ENCODE measurements at regions of chr3 and their contacts with region 1.

Region 1: DNA sequence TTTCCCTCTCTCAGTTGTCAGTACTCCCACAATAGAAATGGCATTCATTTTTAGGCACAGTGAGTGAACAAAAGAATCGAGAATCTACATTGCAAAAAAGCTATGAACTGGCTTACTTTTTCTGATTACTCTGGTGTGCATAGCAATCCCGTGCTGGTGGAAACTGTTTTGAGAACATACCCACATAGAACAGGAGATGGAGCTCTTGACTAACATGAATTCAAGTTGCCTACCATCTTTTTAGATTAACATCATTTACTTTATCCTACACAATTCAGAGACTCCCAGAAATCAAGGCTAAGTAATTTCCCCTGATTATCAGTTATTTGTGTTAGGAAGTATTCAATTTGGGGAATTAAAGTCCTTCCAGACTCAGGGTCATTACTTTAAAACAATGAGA is 326.6 kb downstream of the ARPP21 start:
- DNase-seq: peak; percentile 55
- ATAC-seq: peak; percentile 84
- H3K4me3 ChIP-seq: no peak overlapping the region
- H3K27ac ChIP-seq: no peak overlapping the region
- H3K4me1 ChIP-seq: no peaks in the 10 kb centered on the region
- H3K27me3 ChIP-seq: no peaks in the 10 kb centered on the region
- CTCF ChIP-seq: peak; percentile 59
- POLR2A ChIP-seq: no peak
- RAD21 ChIP-seq: peak; percentile 67

Region 2: GRCh38 chr3:35137612-35138011 is 828.3 kb before region 1 on chr3:
- CTCF ChIA-PET with region 1: no interaction called
- POLR2A ChIA-PET with region 1: no interaction called
- dilution Hi-C with region 1: no loop called
- in situ Hi-C with region 1: no loop called
- intact Hi-C with region 1: no loop called
- DNase-seq: no peak
- ATAC-seq: no peak
- H3K4me3 ChIP-seq: no peak overlapping the region
- H3K27ac ChIP-seq: no peak overlapping the region
- H3K4me1 ChIP-seq: no peaks in the 10 kb centered on the region
- H3K27me3 ChIP-seq: no peaks in the 10 kb centered on the region
- CTCF ChIP-seq: no peak
- POLR2A ChIP-seq: no peak
- RAD21 ChIP-seq: no peak

Region 3: DNA sequence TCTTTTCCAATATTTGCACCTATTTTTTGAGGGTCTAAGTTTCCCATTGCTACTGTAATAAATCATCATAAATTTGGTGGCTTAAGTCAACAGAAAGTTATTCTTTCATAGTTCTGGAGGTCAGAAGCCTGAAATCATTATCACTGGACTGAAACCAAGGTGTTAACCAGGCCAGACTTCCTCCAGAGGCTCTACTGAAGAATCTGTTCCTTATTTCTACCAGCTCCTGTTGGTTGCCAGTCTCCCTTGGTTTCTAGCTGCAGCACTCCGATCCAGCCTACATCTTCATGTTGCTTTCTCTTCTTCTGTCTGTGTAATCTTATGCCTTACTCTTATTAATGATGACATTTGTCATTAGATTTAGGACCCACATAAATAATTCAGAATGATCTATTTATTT is 348.5 kb before region 1 on chr3:
- CTCF ChIA-PET with region 1: no interaction called
- POLR2A ChIA-PET with region 1: no interaction called
- dilution Hi-C with region 1: no loop called
- in situ Hi-C with region 1: no loop called
- intact Hi-C with region 1: no loop called
- DNase-seq: no peak
- ATAC-seq: no peak
- H3K4me3 ChIP-seq: no peak overlapping the region
- H3K27ac ChIP-seq: no peak overlapping the region
- H3K4me1 ChIP-seq: no peaks in the 10 kb centered on the region
- H3K27me3 ChIP-seq: no peaks in the 10 kb centered on the region
- CTCF ChIP-seq: no peak
- POLR2A ChIP-seq: no peak
- RAD21 ChIP-seq: no peak

Region 4: DNA sequence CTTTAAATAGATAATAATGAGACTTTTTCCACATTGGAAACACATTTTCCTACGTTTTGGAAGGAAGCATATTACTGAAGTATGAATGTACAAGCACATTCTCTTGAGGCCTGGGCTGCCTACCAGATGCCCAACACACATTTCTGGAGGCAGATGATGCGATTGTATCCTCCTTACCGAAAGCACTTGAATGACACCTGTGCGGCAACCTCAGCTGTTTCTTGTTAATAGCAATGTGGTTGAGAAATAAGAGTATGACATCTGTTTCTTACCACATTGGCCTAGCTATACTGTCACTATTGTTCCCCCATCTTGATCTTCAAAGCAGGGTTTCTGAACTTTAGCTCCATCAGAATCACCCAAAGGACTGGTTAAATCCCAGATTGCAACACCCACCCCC is 241.8 kb before region 1 on chr3:
- CTCF ChIA-PET with region 1: no interaction called
- POLR2A ChIA-PET with region 1: no interaction called
- dilution Hi-C with region 1: no loop called
- in situ Hi-C with region 1: no loop called
- intact Hi-C with region 1: no loop called
- DNase-seq: no peak
- ATAC-seq: no peak
- H3K4me3 ChIP-seq: no peak overlapping the region
- H3K27ac ChIP-seq: no peak overlapping the region
- H3K4me1 ChIP-seq: no peaks in the 10 kb centered on the region
- H3K27me3 ChIP-seq: no peaks in the 10 kb centered on the region
- CTCF ChIP-seq: no peak
- POLR2A ChIP-seq: no peak
- RAD21 ChIP-seq: no peak

Region 5: DNA sequence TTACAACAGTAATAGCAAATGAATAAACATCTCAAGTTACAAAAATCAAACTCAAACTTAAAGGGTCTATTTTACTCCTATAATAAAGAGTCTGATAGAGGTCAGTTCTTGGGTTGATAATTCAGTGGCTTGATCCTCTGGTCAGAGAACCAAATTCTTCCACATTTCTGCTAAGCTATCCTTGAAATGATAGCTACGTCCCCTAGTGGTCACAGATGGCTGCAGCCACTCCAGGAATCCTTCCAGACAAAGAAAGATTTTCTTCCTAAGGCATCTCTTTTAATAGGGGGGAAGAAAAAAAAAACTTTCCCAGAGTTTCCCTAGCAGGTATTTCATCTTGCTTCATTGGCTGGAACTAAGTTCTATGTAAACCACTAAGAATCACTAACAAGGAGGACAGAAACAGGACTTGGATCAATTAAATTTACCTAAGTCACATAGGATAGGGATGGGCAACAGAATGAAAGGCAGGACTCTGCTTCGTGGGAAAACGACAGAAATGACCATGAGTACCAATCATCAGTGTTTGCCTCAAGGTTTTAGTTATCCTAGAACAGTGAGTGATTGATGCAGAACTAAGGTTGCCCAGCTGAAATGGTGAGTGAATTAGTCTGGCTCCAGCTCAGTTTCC is 575.1 kb after region 1 on chr3:
- CTCF ChIA-PET with region 1: no interaction called
- POLR2A ChIA-PET with region 1: no interaction called
- dilution Hi-C with region 1: no loop called
- in situ Hi-C with region 1: no loop called
- intact Hi-C with region 1: loop called (anchors 1 kb)
- DNase-seq: peak; percentile 9
- ATAC-seq: peak; percentile 53; the same call in 1 of the 2 replicates
- H3K4me3 ChIP-seq: no peak overlapping the region
- H3K27ac ChIP-seq: no peak overlapping the region
- H3K4me1 ChIP-seq: no peaks in the 10 kb centered on the region
- H3K27me3 ChIP-seq: no peaks in the 10 kb centered on the region; the same call in 1 of the 2 replicates
- CTCF ChIP-seq: peak; percentile 53
- POLR2A ChIP-seq: no peak
- RAD21 ChIP-seq: peak; percentile 45

Region 6: DNA sequence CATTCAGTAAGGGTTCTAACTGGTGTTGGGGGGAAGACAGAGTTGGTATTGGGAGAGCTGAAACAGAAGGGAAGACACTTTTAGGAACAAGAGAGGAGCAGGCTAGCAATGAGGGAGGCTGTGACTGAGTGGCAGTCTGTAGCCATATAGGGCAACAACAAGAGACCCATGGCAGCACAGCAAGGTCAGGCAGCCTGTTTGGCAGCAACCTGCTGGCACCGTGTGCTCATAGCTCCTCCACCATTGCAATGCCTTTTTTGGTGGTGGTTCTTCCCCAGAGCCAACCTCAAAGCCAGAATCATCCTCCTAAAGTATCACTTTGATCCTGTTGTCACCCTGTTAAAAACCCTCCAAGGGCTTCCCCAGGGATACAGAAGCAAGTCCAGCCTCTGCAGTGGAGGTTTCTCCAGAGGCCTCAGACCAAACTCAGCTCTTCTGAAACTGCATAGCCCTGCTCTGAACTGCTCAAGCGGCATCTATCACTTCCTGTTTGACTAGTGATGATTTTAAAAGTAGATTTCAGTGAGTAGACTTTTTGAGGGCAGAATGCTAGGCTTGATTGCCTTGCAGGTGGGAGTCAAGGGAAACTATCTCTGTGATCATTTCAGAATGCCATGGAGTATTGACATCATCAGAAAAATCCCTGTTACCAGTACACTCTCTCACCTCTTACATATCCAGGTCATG is 591.3 kb after region 1 on chr3:
- CTCF ChIA-PET with region 1: no interaction called
- POLR2A ChIA-PET with region 1: no interaction called
- dilution Hi-C with region 1: no loop called
- in situ Hi-C with region 1: no loop called
- intact Hi-C with region 1: no loop called
- DNase-seq: no peak
- ATAC-seq: no peak
- H3K4me3 ChIP-seq: no peak overlapping the region
- H3K27ac ChIP-seq: no peak overlapping the region
- H3K4me1 ChIP-seq: no peaks in the 10 kb centered on the region
- H3K27me3 ChIP-seq: no peaks in the 10 kb centered on the region
- CTCF ChIP-seq: no peak
- POLR2A ChIP-seq: no peak
- RAD21 ChIP-seq: no peak

Region 7: DNA sequence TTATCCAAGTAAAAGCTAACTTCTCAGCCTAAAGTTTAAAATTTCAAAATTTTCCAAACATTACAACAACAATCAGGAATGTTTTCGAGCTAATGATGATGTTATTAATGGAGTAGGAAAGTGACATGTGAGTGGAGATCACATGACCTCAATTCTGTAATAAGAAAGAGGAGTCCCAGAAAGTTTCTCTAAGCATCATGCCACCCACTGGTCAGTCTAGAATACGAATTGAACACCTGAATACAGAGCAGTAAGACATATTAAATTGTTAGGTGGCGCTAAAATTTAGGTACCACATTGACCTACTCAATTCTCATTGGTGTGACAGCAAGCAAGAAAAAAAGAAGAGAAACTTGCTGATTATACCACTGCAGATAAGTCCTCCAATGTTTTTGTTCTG is 634.5 kb after region 1 on chr3:
- CTCF ChIA-PET with region 1: no interaction called
- POLR2A ChIA-PET with region 1: no interaction called
- dilution Hi-C with region 1: no loop called
- in situ Hi-C with region 1: no loop called
- intact Hi-C with region 1: loop called (anchors 5 kb)
- DNase-seq: no peak
- ATAC-seq: no peak
- H3K4me3 ChIP-seq: no peak overlapping the region
- H3K27ac ChIP-seq: no peak overlapping the region
- H3K4me1 ChIP-seq: no peaks in the 10 kb centered on the region
- H3K27me3 ChIP-seq: no peaks in the 10 kb centered on the region
- CTCF ChIP-seq: no peak
- POLR2A ChIP-seq: no peak
- RAD21 ChIP-seq: no peak